ENCODE measurements at regions of chr7 and their contacts with region 1.

Region 1: DNA sequence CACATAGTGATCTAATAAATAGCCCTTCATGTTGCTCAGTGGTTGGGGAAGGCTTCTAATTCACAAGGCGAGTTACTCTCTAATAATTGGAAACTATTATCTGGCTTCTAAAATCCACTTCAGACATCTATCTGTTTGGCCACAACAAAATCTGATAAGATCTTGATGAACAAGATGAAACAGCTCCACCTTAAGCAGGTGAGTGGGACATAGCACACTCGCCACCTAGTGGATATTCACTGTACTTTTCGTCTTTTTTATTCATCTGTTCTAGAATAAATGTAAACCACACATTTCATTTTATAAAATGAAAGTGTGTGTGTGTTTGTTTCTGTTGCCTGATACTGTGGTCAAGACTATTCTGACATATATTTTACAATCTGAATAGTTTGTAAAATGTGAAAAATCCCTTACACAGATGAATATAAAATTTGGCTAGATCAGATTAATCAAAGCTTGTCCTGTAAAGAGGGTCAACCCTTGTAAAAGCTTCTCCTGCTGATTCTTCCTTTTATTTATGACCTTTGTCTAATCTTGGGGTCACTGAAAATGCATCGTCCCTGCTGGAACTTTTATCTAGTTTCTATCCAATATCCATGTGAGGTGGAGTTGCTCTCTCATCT is 26.5 kb upstream of the CNTNAP2 start:
- DNase-seq: peak; percentile 41 to 61 (median 55)
- ATAC-seq: peak; percentile 81
- H3K4me3 ChIP-seq: no peak overlapping the region
- H3K27ac ChIP-seq: no peak overlapping the region
- H3K4me1 ChIP-seq: no peaks in the 10 kb centered on the region
- H3K27me3 ChIP-seq: no peaks in the 10 kb centered on the region
- CTCF ChIP-seq: peak; percentile 75 to 87 (median 75)
- EP300 ChIP-seq: no peak
- POLR2A ChIP-seq: no peak
- RAD21 ChIP-seq: peak; percentile 89 to 91

Region 2: DNA sequence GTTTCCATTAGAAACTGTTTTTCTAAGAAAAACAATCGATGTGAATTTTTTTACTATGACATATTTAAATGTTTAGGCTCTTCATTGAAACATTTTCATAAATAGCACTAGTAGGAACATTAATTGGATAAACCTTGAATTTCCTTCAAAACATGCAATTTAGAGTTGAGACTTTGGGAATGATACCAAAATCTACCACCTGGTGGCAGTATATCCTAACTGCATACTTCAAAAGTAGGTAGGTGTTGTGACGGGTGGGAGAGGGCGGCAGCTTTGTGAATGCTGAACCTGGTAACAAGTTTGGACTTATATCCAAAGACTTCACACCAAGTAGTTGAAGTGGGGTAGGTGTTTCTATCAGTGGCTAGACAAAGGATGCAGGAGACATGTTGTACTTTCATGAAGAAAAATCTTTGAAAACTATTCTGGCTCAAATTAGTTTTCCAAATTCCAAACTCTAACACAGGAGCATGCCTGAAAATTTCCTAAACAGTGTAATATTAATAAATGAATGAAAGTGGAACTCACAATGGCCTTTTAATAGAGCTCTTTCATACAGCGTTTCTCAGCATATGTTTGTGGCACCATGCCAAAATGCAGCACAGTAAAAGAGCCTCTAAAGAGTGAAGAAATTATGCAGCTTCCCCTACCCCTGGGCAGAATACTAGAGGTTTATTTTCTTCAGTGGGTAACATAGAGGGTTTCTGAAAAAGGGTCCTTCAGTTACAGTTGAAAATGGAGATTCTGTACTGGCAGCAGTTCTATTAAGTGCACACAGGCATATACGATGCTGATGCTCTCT is 1053.3 kb before region 1 on chr7:
- CTCF ChIA-PET with region 1: interaction called, 6 read pairs
- POLR2A ChIA-PET with region 1: no interaction called
- in situ Hi-C with region 1: no loop called
- intact Hi-C with region 1: loop called (anchors 2 kb)
- DNase-seq: peak; percentile 41 to 66 (median 58)
- ATAC-seq: peak; percentile 81
- H3K4me3 ChIP-seq: no peak overlapping the region
- H3K27ac ChIP-seq: no peak overlapping the region
- H3K4me1 ChIP-seq: no peaks in the 10 kb centered on the region
- H3K27me3 ChIP-seq: no peaks in the 10 kb centered on the region
- CTCF ChIP-seq: peak; percentile 46 to 77 (median 75); a peak in 5 of 6 replicates
- EP300 ChIP-seq: no peak
- POLR2A ChIP-seq: no peak
- RAD21 ChIP-seq: peak; percentile 83 to 85

Region 3: GRCh38 chr7:145753004-145753403 is 337.1 kb before region 1 on chr7:
- CTCF ChIA-PET with region 1: no interaction called
- POLR2A ChIA-PET with region 1: no interaction called
- in situ Hi-C with region 1: no loop called
- intact Hi-C with region 1: loop called (anchors 1 kb)
- DNase-seq: no peak
- ATAC-seq: no peak; the same call in 2 of the 3 replicates
- H3K4me3 ChIP-seq: no peak overlapping the region
- H3K27ac ChIP-seq: no peak overlapping the region
- H3K4me1 ChIP-seq: no peaks in the 10 kb centered on the region; a peak in 1 of 5 replicates
- H3K27me3 ChIP-seq: no peaks in the 10 kb centered on the region
- CTCF ChIP-seq: no peak
- EP300 ChIP-seq: no peak
- POLR2A ChIP-seq: no peak
- RAD21 ChIP-seq: no peak

Region 4: GRCh38 chr7:145884716-145885514 is 205.2 kb before region 1 on chr7:
- CTCF ChIA-PET with region 1: interaction called, 4 read pairs
- POLR2A ChIA-PET with region 1: no interaction called
- in situ Hi-C with region 1: no loop called
- intact Hi-C with region 1: loop called (anchors 10 kb)
- DNase-seq: peak in 1 of 4 experiments; percentile 37
- ATAC-seq: peak; percentile 62
- H3K4me3 ChIP-seq: no peak overlapping the region
- H3K27ac ChIP-seq: no peak overlapping the region
- H3K4me1 ChIP-seq: no peaks in the 10 kb centered on the region
- H3K27me3 ChIP-seq: no peaks in the 10 kb centered on the region
- CTCF ChIP-seq: peak in 1 of 3 experiments; percentile 14; a peak in 1 of 6 replicates
- EP300 ChIP-seq: no peak
- POLR2A ChIP-seq: no peak
- RAD21 ChIP-seq: no peak

Region 5: DNA sequence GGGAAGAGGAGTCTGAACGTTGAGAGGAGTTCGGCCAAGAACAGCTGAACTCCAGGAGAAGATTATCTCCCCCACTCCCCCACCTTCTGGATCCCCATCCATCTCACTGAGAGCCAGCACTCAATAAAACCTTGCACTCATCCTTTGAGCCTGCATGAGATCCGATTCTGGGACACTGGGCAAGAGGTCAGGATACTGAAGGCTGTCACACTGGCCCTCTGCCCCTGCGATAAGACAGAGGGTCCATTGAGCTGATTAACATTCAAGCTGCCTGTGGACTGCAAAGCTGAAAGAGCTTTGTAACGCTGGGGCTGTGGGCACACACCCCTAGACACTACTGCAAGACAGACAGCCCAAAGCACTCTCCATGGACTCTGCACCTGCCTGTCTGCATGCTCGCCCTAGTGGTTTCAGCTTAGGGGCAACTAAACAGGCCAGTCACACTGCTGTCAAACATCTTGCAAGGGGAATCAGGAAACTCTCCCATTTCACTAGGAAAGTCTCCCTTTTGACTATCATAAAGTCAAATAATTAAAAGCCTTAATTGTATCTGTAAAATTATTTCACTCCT is 15.9 kb before region 1 on chr7:
- CTCF ChIA-PET with region 1: no interaction called
- POLR2A ChIA-PET with region 1: no interaction called
- in situ Hi-C with region 1: no loop called
- intact Hi-C with region 1: no loop called
- DNase-seq: no peak
- ATAC-seq: peak; percentile 80
- H3K4me3 ChIP-seq: no peak overlapping the region
- H3K27ac ChIP-seq: no peak overlapping the region
- H3K4me1 ChIP-seq: no peaks in the 10 kb centered on the region
- H3K27me3 ChIP-seq: no peaks in the 10 kb centered on the region
- CTCF ChIP-seq: no peak
- EP300 ChIP-seq: no peak
- POLR2A ChIP-seq: no peak
- RAD21 ChIP-seq: no peak